A673 (cell line): ENCODE measurements at regions of chr12 and their contacts with region 1.

Region 1: GRCh38 chr12:50637870-50638481 is 125.9 kb upstream of the ATF1 start:
- DNase-seq: peak; percentile 72
- H3K4me3 ChIP-seq: no peak overlapping the region
- H3K27ac ChIP-seq: no peak overlapping the region
- H3K4me1 ChIP-seq: peaks cover 42% of the 10 kb centered on the region
- H3K27me3 ChIP-seq: no peaks in the 10 kb centered on the region
- CTCF ChIP-seq: peak; percentile 81

Region 2: DNA sequence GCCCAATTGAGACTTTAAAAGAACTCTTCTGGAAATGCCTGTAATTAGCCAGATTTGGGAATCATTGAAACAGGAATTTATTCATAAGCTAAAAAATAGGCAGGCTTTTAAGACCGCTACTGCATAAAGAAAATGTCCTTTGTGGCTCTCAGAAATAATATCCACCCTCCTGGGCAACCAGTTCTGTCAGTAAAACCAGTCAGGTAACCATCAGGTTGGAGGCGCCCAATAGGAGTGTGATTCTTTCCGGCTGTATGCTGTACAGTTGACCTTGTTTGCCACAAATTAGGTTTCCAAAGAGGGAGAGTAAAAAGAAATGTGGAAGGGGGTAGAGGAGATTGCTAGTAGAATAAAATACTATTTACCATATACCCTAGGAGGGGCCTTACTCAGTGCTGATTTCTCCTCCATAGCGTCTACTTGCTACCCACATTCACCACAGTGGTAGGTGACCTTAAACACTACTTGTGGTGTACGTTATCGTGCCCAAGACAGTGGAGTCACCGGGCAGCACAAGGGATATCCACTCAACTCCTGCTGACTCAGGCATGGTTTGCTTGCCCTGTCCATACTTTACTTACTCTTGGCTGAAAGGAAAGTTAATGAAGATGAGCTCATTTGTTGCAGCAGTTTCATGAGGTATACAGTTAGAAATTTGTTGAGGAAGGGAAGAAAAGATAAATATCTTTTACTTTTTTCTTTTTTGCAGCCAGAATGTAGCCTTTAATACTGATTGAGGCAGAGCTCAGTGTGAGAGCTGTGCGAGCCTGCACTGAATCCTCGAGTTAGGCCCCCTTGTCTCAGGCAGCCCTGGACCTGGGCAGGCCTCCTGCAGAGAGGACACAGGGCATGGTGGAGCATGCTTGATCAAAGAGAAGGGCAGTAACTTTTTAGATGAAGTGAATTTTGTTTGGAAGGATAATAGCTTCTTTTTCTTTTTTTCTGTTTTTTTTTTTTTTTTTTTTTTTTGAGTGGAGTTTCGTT is 56.5 kb before region 1 on chr12:
- CTCF ChIA-PET with region 1: no interaction called
- POLR2A ChIA-PET with region 1: no interaction called
- intact Hi-C with region 1: loop called (anchors 5 kb)
- DNase-seq: no peak
- H3K4me3 ChIP-seq: no peak overlapping the region
- H3K27ac ChIP-seq: peak overlapping the region; percentile 54
- H3K4me1 ChIP-seq: peaks cover 19% of the 10 kb centered on the region
- H3K27me3 ChIP-seq: no peaks in the 10 kb centered on the region
- CTCF ChIP-seq: no peak

Region 3: DNA sequence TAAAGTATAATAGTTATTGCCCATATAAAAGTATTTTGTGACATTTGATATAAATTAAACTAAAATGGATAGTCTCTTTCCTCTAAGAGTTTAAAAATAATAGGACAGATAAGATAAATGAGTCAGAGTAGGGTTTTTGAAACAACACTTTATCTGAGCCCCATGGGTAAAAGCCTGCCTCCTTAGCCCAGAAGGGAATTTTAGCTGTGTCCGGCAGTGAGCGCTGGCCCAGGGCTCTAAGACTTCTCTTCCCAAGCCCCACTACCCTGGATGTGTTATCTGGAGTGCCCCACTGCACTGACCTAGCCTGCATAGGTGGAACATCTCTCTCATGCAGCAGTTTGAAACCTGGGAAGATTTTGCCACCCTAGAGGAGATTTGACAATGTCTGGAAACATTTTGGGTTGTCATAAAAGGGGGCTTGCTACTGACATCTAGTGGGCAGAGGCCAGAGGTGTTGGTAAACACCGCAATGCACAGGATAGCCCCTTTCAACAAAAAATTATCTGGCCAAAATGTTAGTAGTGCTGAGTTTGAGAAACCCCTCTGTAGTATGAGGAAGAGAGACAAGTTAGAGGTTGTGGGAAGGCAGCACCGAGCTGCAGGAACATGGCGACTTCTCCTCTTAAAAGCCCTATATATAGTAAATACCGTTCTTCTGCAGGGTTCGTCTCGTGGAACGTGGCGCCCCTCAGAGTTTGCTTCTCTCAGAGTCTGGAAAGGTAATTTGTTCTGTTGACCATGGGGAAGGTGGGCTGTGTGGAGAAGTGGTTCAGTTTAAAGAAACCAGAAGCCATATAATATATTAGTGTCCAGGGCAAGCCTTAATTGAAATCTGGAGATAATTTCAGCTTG is 96.7 kb after region 1 on chr12:
- CTCF ChIA-PET with region 1: no interaction called
- POLR2A ChIA-PET with region 1: no interaction called
- intact Hi-C with region 1: loop called (anchors 10 kb)
- DNase-seq: peak; percentile 72
- H3K4me3 ChIP-seq: no peak overlapping the region
- H3K27ac ChIP-seq: no peak overlapping the region
- H3K4me1 ChIP-seq: no peaks in the 10 kb centered on the region
- H3K27me3 ChIP-seq: no peaks in the 10 kb centered on the region
- CTCF ChIP-seq: peak; percentile 76